ENCODE measurements at regions of chr6 and their contacts with region 1.

Region 1: DNA sequence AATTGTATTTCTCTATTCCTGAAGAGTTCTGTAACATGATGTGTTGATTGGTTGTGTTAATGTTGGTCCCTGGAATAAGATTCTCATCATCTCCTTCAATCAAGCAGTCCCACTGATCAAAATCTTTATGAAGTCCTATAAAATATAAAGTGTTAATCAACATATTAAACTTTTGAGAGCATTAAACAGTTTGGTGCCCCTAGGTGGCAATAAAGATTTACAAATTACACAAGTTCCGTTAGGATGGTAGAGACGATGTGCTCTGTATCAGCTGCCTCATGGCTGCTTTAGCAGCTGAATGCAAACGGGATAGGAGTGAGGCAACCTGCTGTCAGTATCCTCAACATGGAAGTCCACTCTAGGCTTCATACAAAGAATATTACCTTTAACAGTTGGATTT is 16.9 kb downstream of the TDRD6 start:
- DNase-seq: peak; percentile 12
- H3K4me3 ChIP-seq: no peak overlapping the region
- H3K27ac ChIP-seq: no peak overlapping the region
- H3K4me1 ChIP-seq: no peaks in the 10 kb centered on the region
- H3K27me3 ChIP-seq: peaks cover 27% of the 10 kb centered on the region
- CTCF ChIP-seq: no peak; the same call in 1 of the 2 replicates

Region 2: GRCh38 chr6:46781478-46782378 is 77.2 kb after region 1 on chr6:
- CTCF ChIA-PET with region 1: no interaction called
- POLR2A ChIA-PET with region 1: no interaction called
- intact Hi-C with region 1: loop called (anchors 5 kb)
- DNase-seq: peak; percentile 77
- H3K4me3 ChIP-seq: no peak overlapping the region
- H3K27ac ChIP-seq: no peak overlapping the region
- H3K4me1 ChIP-seq: no peaks in the 10 kb centered on the region
- H3K27me3 ChIP-seq: no peaks in the 10 kb centered on the region
- CTCF ChIP-seq: peak; percentile 80

Region 3: DNA sequence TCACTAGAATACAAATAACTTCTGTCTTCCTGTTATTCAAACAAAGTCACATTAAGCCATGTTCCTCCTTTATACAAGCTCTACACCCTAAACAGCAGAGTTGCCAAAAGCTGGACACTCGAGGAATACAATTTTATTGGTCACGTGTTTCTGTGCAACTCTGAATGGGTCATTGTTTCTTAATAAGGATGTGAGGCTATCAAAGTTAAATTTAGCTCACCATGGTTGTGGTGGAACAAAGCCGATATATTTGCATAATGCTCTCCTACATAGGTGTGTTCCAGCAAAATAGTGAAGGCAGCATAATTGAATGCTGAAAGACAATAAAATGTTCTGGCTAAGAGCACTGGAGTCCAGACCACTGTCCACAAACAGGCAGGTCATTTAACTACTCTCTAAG is 736.2 kb after region 1 on chr6:
- CTCF ChIA-PET with region 1: no interaction called
- POLR2A ChIA-PET with region 1: no interaction called
- intact Hi-C with region 1: no loop called
- DNase-seq: no peak
- H3K4me3 ChIP-seq: no peak overlapping the region
- H3K27ac ChIP-seq: no peak overlapping the region
- H3K4me1 ChIP-seq: no peaks in the 10 kb centered on the region
- H3K27me3 ChIP-seq: peaks cover 3% of the 10 kb centered on the region
- CTCF ChIP-seq: no peak